Naive thymus-derived CD4-positive, alpha-beta T cell (primary cell): ENCODE measurements at regions of chr1 and their contacts with region 1.

Region 1: GRCh38 chr1:202745323-202745888 is 35.2 kb upstream of the SYT2 start:
- DNase-seq: no peak
- ATAC-seq: no peak
- H3K4me3 ChIP-seq: no peak overlapping the region
- H3K4me3 Mint-ChIP-seq: no peak overlapping the region
- H3K27ac ChIP-seq: no peak overlapping the region
- H3K27ac Mint-ChIP-seq: peak overlapping the region in 1 of 9 donors; percentile 24
- H3K4me1 ChIP-seq: no peaks in the 10 kb centered on the region
- H3K4me1 Mint-ChIP-seq: no peaks in the 10 kb centered on the region
- H3K27me3 ChIP-seq: no peaks in the 10 kb centered on the region
- H3K27me3 Mint-ChIP-seq: no peaks in the 10 kb centered on the region

Region 2: GRCh38 chr1:202765721-202766120 is 20.3 kb after region 1 on chr1:
- CTCF ChIA-PET with region 1: no interaction called
- POLR2A ChIA-PET with region 1: no interaction called
- intact Hi-C with region 1: no loop called
- DNase-seq: no peak
- ATAC-seq: no peak
- H3K4me3 ChIP-seq: no peak overlapping the region
- H3K4me3 Mint-ChIP-seq: no peak overlapping the region
- H3K27ac ChIP-seq: no peak overlapping the region
- H3K27ac Mint-ChIP-seq: no peak overlapping the region
- H3K4me1 ChIP-seq: no peaks in the 10 kb centered on the region
- H3K4me1 Mint-ChIP-seq: peaks cover 0 to 3% (median 0%) of the 10 kb centered on the region in 7 donors
- H3K27me3 ChIP-seq: no peaks in the 10 kb centered on the region
- H3K27me3 Mint-ChIP-seq: no peaks in the 10 kb centered on the region

Region 3: DNA sequence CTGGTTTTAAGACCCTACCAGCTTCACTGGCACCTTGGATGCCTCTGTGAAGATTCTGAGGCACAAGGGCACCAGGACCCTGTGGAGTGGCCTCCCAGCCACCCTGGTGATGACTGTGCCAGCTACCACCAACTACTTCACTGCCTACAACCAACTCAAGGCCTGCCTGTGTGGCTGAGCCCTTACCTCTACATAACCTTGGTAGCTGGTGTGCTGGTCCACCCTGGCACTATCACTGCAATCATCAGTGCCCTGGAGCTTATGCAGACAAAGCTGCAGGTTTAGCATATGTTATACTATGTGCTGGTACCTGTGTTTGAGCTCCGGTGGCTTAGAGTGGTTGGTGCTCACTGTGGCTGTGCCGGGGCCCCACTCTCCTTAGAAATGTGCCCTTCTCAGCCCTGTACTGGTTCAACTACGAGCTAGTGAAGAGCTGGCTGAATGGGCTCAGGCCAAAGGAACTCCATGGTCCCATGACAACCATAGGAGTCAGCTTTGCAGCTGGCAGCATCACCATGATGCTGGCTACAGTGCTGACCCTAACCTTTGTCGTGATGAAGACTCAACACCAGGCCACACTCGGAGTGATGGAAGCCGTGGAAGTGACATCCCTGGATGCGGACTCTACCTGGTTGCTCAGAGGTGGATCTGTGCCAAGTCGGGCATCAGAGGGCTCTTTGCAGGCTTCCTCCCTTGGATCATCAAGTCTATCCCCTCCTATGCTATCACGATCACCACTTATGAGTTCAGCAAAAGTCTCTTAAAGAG is 51.1 kb after region 1 on chr1:
- CTCF ChIA-PET with region 1: no interaction called
- POLR2A ChIA-PET with region 1: no interaction called
- intact Hi-C with region 1: loop called in 1 of 2 experiments (anchors 5 kb)
- DNase-seq: no peak
- ATAC-seq: no peak
- H3K4me3 ChIP-seq: no peak overlapping the region
- H3K4me3 Mint-ChIP-seq: no peak overlapping the region
- H3K27ac ChIP-seq: no peak overlapping the region
- H3K27ac Mint-ChIP-seq: no peak overlapping the region
- H3K4me1 ChIP-seq: peaks cover 0 to 6% of the 10 kb centered on the region in 2 donors
- H3K4me1 Mint-ChIP-seq: peaks cover 17 to 63% (median 47%) of the 10 kb centered on the region in 7 donors
- H3K27me3 ChIP-seq: no peaks in the 10 kb centered on the region
- H3K27me3 Mint-ChIP-seq: no peaks in the 10 kb centered on the region